Activated CD4-positive, alpha-beta T cell treated with anti-CD3 and anti-CD28 coated beads, Interleukin-2, amount 10 ng/mL, durations not matched to agents 7 days and 5 days (primary cell): ENCODE measurements at regions of chr11 and their contacts with region 1.

Region 1: GRCh38 chr11:18981897-18982296 is 42.7 kb upstream of the MRGPRX1 start:
- DNase-seq: no peak
- H3K4me3 Mint-ChIP-seq: no peak overlapping the region
- H3K27ac Mint-ChIP-seq: no peak overlapping the region
- H3K4me1 Mint-ChIP-seq: no peaks in the 10 kb centered on the region
- H3K27me3 Mint-ChIP-seq: peaks cover 6% of the 10 kb centered on the region

Region 2: GRCh38 chr11:17408641-17409040 is 1573.3 kb before region 1 on chr11:
- CTCF ChIA-PET with region 1: no interaction called
- POLR2A ChIA-PET with region 1: interaction called, 10 read pairs
- DNase-seq: no peak
- H3K4me3 Mint-ChIP-seq: no peak overlapping the region
- H3K27ac Mint-ChIP-seq: no peak overlapping the region
- H3K4me1 Mint-ChIP-seq: peaks cover 13% of the 10 kb centered on the region
- H3K27me3 Mint-ChIP-seq: peaks cover 2% of the 10 kb centered on the region

Region 3: GRCh38 chr11:18994860-18995259 is 13.0 kb after region 1 on chr11:
- CTCF ChIA-PET with region 1: no interaction called
- POLR2A ChIA-PET with region 1: no interaction called
- DNase-seq: no peak
- H3K4me3 Mint-ChIP-seq: no peak overlapping the region
- H3K27ac Mint-ChIP-seq: no peak overlapping the region
- H3K4me1 Mint-ChIP-seq: no peaks in the 10 kb centered on the region
- H3K27me3 Mint-ChIP-seq: peaks cover 5% of the 10 kb centered on the region